ENCODE measurements at regions of chr3 and their contacts with region 1.

Region 1: GRCh38 chr3:195909644-195910508 is 1.5 kb upstream of the TNK2 start:
- DNase-seq: peak; percentile 94
- ATAC-seq: peak; percentile 67
- H3K4me3 ChIP-seq: peak overlapping the region; percentile 6 to 61 (median 53)
- H3K4me3 Mint-ChIP-seq: peak overlapping the region; percentile 83
- H3K27ac ChIP-seq: peak overlapping the region; percentile 43 to 74
- H3K27ac Mint-ChIP-seq: peak overlapping the region; percentile 87
- H3K4me1 ChIP-seq: peaks cover 39 to 44% of the 10 kb centered on the region in 2 donors
- H3K4me1 Mint-ChIP-seq: peaks cover 41% of the 10 kb centered on the region
- H3K27me3 ChIP-seq: no peaks in the 10 kb centered on the region
- H3K27me3 Mint-ChIP-seq: no peaks in the 10 kb centered on the region
- CTCF ChIP-seq: no peak

Region 2: GRCh38 chr3:195542698-195543499 is 367.0 kb before region 1 on chr3 and contains the start of gene PPP1R2:
- CTCF ChIA-PET with region 1: no interaction called
- POLR2A ChIA-PET with region 1: interaction called, 12 read pairs
- intact Hi-C with region 1: no loop called
- DNase-seq: peak; percentile 95
- ATAC-seq: peak; percentile 90
- H3K4me3 ChIP-seq: peak within 1 kb of the TSS; percentile 75 to 95 (median 93)
- H3K4me3 Mint-ChIP-seq: peak within 1 kb of the TSS; percentile 97
- H3K27ac ChIP-seq: peak within 1 kb of the TSS; percentile 96 to 98
- H3K27ac Mint-ChIP-seq: peak within 1 kb of the TSS; percentile 96
- H3K4me1 ChIP-seq: peaks cover 58 to 65% of the 10 kb centered on the region in 2 donors
- H3K4me1 Mint-ChIP-seq: peaks cover 77% of the 10 kb centered on the region
- H3K27me3 ChIP-seq: no peaks in the 10 kb centered on the region
- H3K27me3 Mint-ChIP-seq: no peaks in the 10 kb centered on the region
- CTCF ChIP-seq: no peak
- total RNA-seq, gene PPP1R2: 73.8 and 81.8 TPM in 2 replicates

Region 3: DNA sequence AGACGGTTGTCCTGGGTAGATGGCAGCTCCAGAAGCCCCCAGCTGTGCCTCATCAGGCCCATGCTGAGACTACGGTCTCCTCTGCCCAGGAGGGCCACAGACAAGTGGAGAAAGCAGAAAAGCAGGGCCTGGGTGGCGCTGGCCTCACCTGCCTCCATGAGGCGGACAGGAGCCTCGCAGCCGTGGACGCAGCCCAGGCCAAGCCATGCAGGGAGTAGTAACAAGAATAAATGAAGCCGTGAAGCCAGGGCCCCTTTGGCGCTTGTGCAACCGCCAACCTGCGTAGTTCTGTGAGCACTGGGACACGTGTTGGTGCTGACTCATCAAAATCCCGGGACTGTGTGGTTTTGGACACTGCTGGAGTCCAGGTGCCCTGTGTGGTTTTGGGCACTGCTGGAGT is 85.9 kb before region 1 on chr3:
- CTCF ChIA-PET with region 1: no interaction called
- POLR2A ChIA-PET with region 1: no interaction called
- intact Hi-C with region 1: no loop called
- DNase-seq: no peak
- ATAC-seq: no peak
- H3K4me3 ChIP-seq: no peak overlapping the region
- H3K4me3 Mint-ChIP-seq: no peak overlapping the region
- H3K27ac ChIP-seq: no peak overlapping the region
- H3K27ac Mint-ChIP-seq: no peak overlapping the region
- H3K4me1 ChIP-seq: no peaks in the 10 kb centered on the region
- H3K4me1 Mint-ChIP-seq: no peaks in the 10 kb centered on the region
- H3K27me3 ChIP-seq: peaks cover 0 to 4% (median 2%) of the 10 kb centered on the region in 4 experiments
- H3K27me3 Mint-ChIP-seq: peaks cover 9% of the 10 kb centered on the region
- CTCF ChIP-seq: no peak

Region 4: GRCh38 chr3:195850857-195851543 is 58.9 kb before region 1 on chr3:
- CTCF ChIA-PET with region 1: interaction called, 233 read pairs
- POLR2A ChIA-PET with region 1: interaction called, 6 read pairs
- intact Hi-C with region 1: no loop called
- DNase-seq: peak; percentile 93
- ATAC-seq: peak; percentile 100
- H3K4me3 ChIP-seq: peak overlapping the region in 2 of 5 experiments; percentile 12 to 15
- H3K4me3 Mint-ChIP-seq: peak overlapping the region; percentile 57
- H3K27ac ChIP-seq: no peak overlapping the region
- H3K27ac Mint-ChIP-seq: peak overlapping the region; percentile 53
- H3K4me1 ChIP-seq: peaks cover 4 to 8% of the 10 kb centered on the region in 2 donors
- H3K4me1 Mint-ChIP-seq: peaks cover 7% of the 10 kb centered on the region
- H3K27me3 ChIP-seq: no peaks in the 10 kb centered on the region
- H3K27me3 Mint-ChIP-seq: peaks cover 27% of the 10 kb centered on the region
- CTCF ChIP-seq: peak; percentile 100

Region 5: GRCh38 chr3:195863121-195864006 is 46.5 kb before region 1 on chr3:
- CTCF ChIA-PET with region 1: interaction called, 233 read pairs
- POLR2A ChIA-PET with region 1: interaction called, 7 read pairs
- intact Hi-C with region 1: loop called (anchors 1 kb)
- DNase-seq: peak; percentile 73
- ATAC-seq: peak; percentile 82
- H3K4me3 ChIP-seq: no peak overlapping the region
- H3K4me3 Mint-ChIP-seq: no peak overlapping the region
- H3K27ac ChIP-seq: no peak overlapping the region
- H3K27ac Mint-ChIP-seq: peak overlapping the region; percentile 26
- H3K4me1 ChIP-seq: peaks cover 0 to 7% of the 10 kb centered on the region in 2 donors
- H3K4me1 Mint-ChIP-seq: peaks cover 11% of the 10 kb centered on the region
- H3K27me3 ChIP-seq: peaks cover 0 to 3% (median 0%) of the 10 kb centered on the region in 4 experiments
- H3K27me3 Mint-ChIP-seq: no peaks in the 10 kb centered on the region
- CTCF ChIP-seq: peak; percentile 90

Region 6: DNA sequence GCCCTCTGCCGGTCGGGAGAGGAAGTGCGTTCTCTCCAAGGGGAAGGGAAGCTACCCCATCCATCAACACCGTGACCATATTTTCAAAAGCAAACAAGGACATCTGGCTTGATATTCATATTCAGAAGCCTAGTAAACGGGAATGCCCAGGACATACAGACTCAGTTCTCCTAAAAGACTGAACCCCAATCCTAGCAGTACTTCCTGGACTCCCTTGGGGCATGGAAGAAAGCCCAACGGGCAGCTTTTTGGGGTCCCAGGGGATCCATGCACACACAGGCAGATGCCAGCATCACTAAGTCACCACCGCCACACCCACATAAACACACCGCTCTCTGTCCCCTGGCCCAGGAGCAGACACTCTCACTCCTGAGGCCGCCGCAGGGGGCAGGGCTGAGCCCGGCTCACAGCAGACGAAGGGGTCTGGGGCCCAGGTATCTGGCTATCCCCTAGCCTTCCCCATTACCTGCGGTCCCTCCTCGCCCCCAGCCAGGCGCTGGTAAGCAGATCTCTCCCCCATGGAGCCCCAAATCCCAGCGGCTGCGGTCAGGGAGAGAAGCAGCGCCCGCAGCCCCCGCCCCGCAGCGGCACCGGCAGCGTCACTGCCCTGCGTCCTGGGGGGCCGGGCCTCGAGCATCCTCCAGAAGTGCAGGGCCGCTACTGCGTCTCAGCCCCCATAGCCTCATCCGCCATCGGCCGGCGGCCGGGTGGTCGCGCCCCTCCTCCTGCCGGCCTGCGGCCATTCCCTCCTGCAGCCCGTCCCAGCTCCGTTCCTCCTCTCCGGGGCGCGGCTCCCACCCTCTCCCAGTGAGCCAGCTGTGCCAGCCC is 14.9 kb before region 1 on chr3:
- CTCF ChIA-PET with region 1: interaction called, 223 read pairs
- POLR2A ChIA-PET with region 1: interaction called, 134 read pairs
- intact Hi-C with region 1: loop called (anchors 1 kb)
- DNase-seq: peak; percentile 85
- ATAC-seq: peak; percentile 68
- H3K4me3 ChIP-seq: peak overlapping the region; percentile 63 to 79 (median 74)
- H3K4me3 Mint-ChIP-seq: peak overlapping the region; percentile 95
- H3K27ac ChIP-seq: peak overlapping the region; percentile 75 to 87
- H3K27ac Mint-ChIP-seq: peak overlapping the region; percentile 95
- H3K4me1 ChIP-seq: peaks cover 49 to 58% of the 10 kb centered on the region in 2 donors
- H3K4me1 Mint-ChIP-seq: peaks cover 52% of the 10 kb centered on the region
- H3K27me3 ChIP-seq: no peaks in the 10 kb centered on the region
- H3K27me3 Mint-ChIP-seq: no peaks in the 10 kb centered on the region
- CTCF ChIP-seq: peak; percentile 77

Region 7: GRCh38 chr3:195931582-195932273 is 21.9 kb after region 1 on chr3:
- CTCF ChIA-PET with region 1: no interaction called
- POLR2A ChIA-PET with region 1: no interaction called
- intact Hi-C with region 1: no loop called
- DNase-seq: no peak
- ATAC-seq: no peak
- H3K4me3 ChIP-seq: no peak overlapping the region
- H3K4me3 Mint-ChIP-seq: no peak overlapping the region
- H3K27ac ChIP-seq: no peak overlapping the region
- H3K27ac Mint-ChIP-seq: no peak overlapping the region
- H3K4me1 ChIP-seq: no peaks in the 10 kb centered on the region
- H3K4me1 Mint-ChIP-seq: no peaks in the 10 kb centered on the region
- H3K27me3 ChIP-seq: no peaks in the 10 kb centered on the region
- H3K27me3 Mint-ChIP-seq: no peaks in the 10 kb centered on the region
- CTCF ChIP-seq: no peak

Region 8: DNA sequence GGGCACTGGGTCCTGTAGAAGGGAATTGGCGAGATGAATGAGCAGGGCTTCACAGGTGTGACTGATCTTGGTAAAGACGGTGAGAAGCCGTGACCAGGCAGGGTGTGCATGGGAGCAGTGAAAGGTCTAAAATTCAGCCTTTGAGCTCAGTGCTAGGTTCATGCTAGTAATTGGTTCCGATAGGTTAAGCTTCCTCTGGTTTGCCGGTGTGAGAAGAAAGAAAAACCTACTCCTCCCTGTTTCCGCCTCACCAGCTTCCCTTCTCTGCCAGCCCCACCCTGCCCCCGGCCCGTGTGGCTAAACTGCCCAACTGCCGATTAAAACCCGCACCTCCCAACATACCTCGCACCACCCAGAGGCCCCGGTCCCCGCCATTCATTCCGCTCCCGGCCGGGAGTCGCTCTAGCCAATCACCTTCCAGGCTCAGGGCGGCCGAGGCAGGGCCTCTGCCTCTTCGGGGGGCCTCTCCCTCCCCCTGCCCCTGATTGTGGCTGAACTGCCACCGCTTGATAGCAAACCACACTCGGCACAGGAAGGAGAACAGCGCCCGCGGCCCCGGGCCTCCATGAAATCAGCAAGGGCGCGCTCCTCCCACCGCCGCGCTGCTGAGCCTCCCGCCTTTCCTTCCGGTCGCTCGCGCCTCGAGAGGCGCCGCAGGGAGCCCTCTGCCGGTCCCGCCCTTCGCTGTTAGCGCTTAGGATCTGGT is 722.3 kb after region 1 on chr3:
- CTCF ChIA-PET with region 1: no interaction called
- POLR2A ChIA-PET with region 1: no interaction called
- intact Hi-C with region 1: loop called (anchors 10 kb)
- DNase-seq: peak; percentile 90
- ATAC-seq: peak; percentile 82
- H3K4me3 ChIP-seq: peak overlapping the region; percentile 60 to 78 (median 70)
- H3K4me3 Mint-ChIP-seq: peak overlapping the region; percentile 92
- H3K27ac ChIP-seq: peak overlapping the region; percentile 94 to 97
- H3K27ac Mint-ChIP-seq: peak overlapping the region; percentile 96
- H3K4me1 ChIP-seq: peaks cover 29 to 49% of the 10 kb centered on the region in 2 donors
- H3K4me1 Mint-ChIP-seq: peaks cover 52% of the 10 kb centered on the region
- H3K27me3 ChIP-seq: no peaks in the 10 kb centered on the region
- H3K27me3 Mint-ChIP-seq: no peaks in the 10 kb centered on the region
- CTCF ChIP-seq: peak; percentile 29

Measured in B cell (primary cell).